Breast epithelium (tissue), 4 donors: ENCODE measurements at regions of chr16 and their contacts with region 1.

Region 1: DNA sequence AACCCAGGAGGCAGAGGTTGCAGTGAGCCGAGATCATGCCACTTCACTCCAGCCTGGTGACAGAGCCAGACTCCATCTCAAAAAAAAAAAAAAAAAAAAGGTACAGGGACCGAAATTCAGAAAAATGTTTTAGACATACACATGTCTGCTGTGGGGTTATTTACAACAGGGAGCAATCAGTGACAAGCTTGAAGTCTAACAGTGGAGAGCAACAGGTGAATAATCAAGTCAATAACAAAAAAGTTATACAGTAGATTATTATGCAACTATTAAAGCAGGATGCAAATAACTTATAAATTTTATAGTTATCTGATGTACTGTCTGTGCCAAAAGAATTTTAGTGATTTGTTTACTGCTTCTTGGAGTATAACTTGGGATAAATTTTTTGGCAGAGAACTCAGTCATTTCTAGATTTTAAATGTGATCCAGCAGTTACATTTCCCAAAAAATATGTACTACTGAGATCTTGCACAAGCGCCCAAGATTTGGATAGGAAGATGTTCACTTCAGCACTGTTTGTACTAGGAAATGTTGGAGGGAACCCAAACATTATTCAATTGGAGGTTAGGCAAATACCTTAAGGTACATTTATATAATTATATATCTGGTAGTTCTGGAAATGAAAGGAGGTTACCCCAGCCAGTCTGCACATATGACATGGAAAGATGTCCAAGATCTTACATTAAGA is 34.1 kb downstream of the EEF2K start:
- DNase-seq: no peak
- H3K4me3 ChIP-seq: no peak overlapping the region
- H3K27ac ChIP-seq: peak overlapping the region; percentile 59 to 70
- H3K4me1 ChIP-seq: peaks cover 4 to 9% of the 10 kb centered on the region in 2 donors
- H3K27me3 ChIP-seq: no peaks in the 10 kb centered on the region
- CTCF ChIP-seq: no peak
- POLR2A ChIP-seq: no peak

Region 2: DNA sequence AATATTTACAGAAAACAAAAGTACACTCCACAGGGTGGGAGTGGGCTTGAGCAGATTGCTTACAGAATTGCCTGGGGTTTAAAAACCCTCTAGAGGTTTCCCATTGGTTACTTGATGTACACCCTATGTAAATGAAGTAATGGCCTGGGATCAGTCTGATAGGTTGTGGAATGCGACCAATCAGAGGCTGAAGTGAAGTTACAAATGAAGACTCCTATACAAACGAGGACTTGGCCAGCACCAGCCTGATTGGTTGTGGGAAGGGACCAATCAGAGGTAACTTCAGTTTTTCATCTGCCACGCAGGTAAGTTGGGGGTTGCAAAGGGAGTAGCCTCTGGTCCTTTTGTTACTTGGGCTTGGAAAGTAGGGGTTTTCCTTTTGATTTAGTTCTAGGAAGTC is 25.3 kb before region 1 on chr16:
- intact Hi-C with region 1: loop called (anchors 1 kb)
- DNase-seq: no peak
- H3K4me3 ChIP-seq: no peak overlapping the region
- H3K27ac ChIP-seq: no peak overlapping the region
- H3K4me1 ChIP-seq: no peaks in the 10 kb centered on the region
- H3K27me3 ChIP-seq: no peaks in the 10 kb centered on the region
- CTCF ChIP-seq: no peak
- POLR2A ChIP-seq: no peak

Region 3: DNA sequence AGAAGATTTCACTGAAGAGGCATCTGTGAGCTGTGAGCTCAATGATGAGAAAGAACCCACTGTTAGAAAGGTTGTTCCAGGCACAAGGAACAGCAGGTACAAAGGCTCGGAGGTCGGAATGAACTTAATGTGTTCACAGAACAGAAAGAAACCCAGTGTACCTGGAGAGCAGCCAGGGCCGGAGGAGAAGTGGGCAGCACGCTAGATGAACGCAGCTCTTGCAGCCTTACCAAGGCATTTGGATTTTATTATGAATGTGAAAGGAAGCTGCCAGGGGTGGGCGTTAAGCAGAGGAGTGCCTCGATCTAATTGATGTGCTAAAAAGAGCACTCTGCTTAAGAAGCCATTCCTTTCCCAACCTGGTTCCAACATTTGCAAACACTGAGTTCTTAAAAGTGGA is 15.1 kb before region 1 on chr16:
- intact Hi-C with region 1: no loop called
- DNase-seq: peak in 1 of 2 donors; percentile 40
- H3K4me3 ChIP-seq: no peak overlapping the region
- H3K27ac ChIP-seq: peak overlapping the region; percentile 40 to 73
- H3K4me1 ChIP-seq: no peaks in the 10 kb centered on the region
- H3K27me3 ChIP-seq: no peaks in the 10 kb centered on the region
- CTCF ChIP-seq: no peak
- POLR2A ChIP-seq: no peak